Heart right ventricle (tissue), 16 donors: ENCODE measurements at regions of chr18 and their contacts with region 1.

Region 1: DNA sequence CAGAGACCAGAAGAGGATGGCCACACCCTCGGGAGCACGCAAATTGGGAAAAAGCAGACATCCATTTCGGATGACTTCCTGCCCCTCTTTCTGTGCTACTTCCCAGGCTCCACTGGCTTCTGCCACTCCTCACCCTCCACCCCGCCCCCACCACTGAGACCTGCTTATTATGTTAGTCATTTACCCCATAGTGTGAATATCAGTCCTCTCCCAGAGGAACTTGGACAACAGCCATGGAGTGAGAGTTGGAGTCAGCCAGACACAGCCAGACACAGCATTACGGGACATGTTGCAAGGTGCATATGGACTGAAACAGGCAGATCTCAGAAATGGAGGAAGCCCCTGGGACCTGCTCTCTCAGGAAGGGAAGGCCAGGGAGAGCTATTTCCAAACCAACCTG is 51.8 kb downstream of the CTIF start:
- DNase-seq: no peak
- ATAC-seq: peak in 6 of 8 donors; percentile 6 to 62 (median 36)
- H3K4me3 ChIP-seq: no peak overlapping the region
- H3K27ac ChIP-seq: peak overlapping the region in 9 of 10 donors; percentile 19 to 86 (median 74)
- H3K4me1 ChIP-seq: peaks cover 6 to 64% (median 31%) of the 10 kb centered on the region in 9 donors
- H3K27me3 ChIP-seq: no peaks in the 10 kb centered on the region
- CTCF ChIP-seq: no peak

Region 2: DNA sequence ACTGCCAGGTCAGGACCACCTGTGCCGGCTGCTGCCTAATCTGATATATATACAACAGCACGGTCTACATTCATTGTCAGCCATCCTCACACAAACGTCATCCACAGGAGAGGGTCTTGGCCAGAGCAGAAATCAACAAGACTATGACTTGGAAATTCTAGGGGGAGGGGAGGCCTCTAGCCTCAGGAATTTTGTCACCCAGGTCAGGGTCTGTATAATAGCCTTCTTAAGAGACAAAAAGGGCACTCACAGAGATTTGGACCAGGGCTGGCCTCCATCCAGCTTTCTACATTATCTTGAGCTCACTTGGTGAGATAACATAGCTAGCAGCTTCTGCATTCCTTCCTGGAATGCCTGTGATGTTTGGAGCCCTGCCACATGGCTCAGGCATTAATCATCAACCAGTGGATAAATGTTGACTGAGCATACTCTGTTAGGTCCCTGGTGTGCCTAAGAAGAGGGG is 102.3 kb before region 1 on chr18:
- intact Hi-C with region 1: loop called in 1 of 10 experiments (anchors 10 kb)
- DNase-seq: peak; percentile 63 to 81
- ATAC-seq: peak; percentile 79 to 95 (median 91)
- H3K4me3 ChIP-seq: no peak overlapping the region
- H3K27ac ChIP-seq: peak overlapping the region in 5 of 10 donors; percentile 46 to 75 (median 72)
- H3K4me1 ChIP-seq: peaks cover 0 to 37% (median 16%) of the 10 kb centered on the region in 9 donors
- H3K27me3 ChIP-seq: no peaks in the 10 kb centered on the region
- CTCF ChIP-seq: no peak

Region 3: DNA sequence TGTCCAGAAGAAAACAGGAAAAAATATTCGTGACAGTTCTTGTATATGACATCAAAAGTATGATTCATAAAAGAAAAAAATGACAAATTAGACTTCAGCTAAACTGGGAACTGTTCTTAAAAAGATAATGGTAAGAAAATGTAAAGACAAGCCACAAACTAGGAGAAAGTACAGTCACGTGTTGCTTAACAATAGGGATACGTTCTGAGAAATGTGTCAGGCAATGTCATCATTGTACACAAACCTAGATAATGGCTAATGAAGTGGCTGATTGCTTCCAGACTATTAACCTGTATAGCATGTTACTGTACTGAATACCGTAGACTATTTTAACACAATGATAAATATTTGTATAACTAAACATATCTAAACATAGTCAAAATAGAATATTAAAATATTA is 87.8 kb before region 1 on chr18:
- intact Hi-C with region 1: no loop called
- DNase-seq: no peak
- ATAC-seq: no peak
- H3K4me3 ChIP-seq: no peak overlapping the region
- H3K27ac ChIP-seq: no peak overlapping the region
- H3K4me1 ChIP-seq: no peaks in the 10 kb centered on the region
- H3K27me3 ChIP-seq: no peaks in the 10 kb centered on the region
- CTCF ChIP-seq: no peak